ENCODE measurements at regions of chr7 and their contacts with region 1.

Region 1: GRCh38 chr7:83289419-83289993 is 126.8 kb upstream of the PCLO start:
- DNase-seq: no peak
- H3K4me3 ChIP-seq: no peak overlapping the region
- H3K4me1 ChIP-seq: peaks cover 5% of the 10 kb centered on the region; the same call in 1 of the 2 replicates
- H3K27me3 ChIP-seq: no peaks in the 10 kb centered on the region; the same call in 1 of the 2 replicates

Region 2: DNA sequence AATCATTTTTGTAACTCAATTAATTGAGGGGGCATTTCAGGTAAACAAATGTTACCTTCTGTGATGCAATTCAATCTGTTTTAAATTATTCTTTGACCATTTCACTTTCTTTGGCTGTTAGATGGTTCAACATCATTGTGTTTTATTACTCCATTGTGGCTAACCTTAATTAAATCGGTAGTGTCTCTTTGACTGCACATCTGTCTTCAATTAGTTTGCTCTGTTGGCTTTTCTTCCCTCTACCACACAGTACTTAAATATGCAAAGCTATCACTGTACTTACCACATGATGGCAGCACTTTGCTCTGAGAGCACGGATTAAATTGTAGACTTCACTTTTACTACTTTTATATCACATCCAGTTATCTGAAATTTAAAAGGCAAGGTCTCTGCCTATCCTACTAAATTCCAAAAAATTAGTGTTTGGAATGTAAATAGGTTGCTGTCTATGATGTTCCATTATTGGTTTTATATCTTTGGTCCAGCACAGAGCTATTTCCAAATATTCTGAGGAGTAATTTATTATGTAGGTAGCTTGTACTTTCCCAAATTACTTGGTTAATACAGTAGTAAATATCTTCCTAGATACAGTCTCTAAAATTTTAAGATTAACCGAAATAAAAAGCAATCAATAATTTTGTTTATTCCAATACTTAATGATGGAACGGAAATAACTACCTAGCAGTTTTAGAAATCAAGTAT is 478.8 kb before region 1 on chr7:
- in situ Hi-C with region 1: loop called (anchors 25 kb)
- DNase-seq: peak; percentile 37 to 62
- H3K4me3 ChIP-seq: no peak overlapping the region
- H3K4me1 ChIP-seq: no peaks in the 10 kb centered on the region
- H3K27me3 ChIP-seq: no peaks in the 10 kb centered on the region

Region 3: GRCh38 chr7:83866582-83866981 is 577.1 kb after region 1 on chr7:
- in situ Hi-C with region 1: no loop called
- DNase-seq: no peak
- H3K4me3 ChIP-seq: no peak overlapping the region
- H3K4me1 ChIP-seq: no peaks in the 10 kb centered on the region
- H3K27me3 ChIP-seq: no peaks in the 10 kb centered on the region